Activated T-helper 2 cell treated with anti-CD3 and anti-CD28 coated beads, Interferon-gamma antibody, Interleukin-2, Interleukin-4, amounts not matched to agents 10 μg/mL and 5 μg/mL and 100 μg/mL, durations not matched to agents 14 hours and 24 hours and 36 hours (primary cell): ENCODE measurements at regions of chr22 and their contacts with region 1.

Region 1: GRCh38 chr22:21001560-21002325 is at the start of gene THAP7:
- DNase-seq: peak; percentile 95
- H3K4me3 Mint-ChIP-seq: peak within 1 kb of the TSS; percentile 95
- H3K27ac Mint-ChIP-seq: peak within 1 kb of the TSS; percentile 98
- H3K4me1 Mint-ChIP-seq: peaks cover 15% of the 10 kb centered on the region
- H3K27me3 Mint-ChIP-seq: no peaks in the 10 kb centered on the region
- total RNA-seq, gene THAP7: 25.8 and 25.9 TPM in 2 replicates

Region 2: DNA sequence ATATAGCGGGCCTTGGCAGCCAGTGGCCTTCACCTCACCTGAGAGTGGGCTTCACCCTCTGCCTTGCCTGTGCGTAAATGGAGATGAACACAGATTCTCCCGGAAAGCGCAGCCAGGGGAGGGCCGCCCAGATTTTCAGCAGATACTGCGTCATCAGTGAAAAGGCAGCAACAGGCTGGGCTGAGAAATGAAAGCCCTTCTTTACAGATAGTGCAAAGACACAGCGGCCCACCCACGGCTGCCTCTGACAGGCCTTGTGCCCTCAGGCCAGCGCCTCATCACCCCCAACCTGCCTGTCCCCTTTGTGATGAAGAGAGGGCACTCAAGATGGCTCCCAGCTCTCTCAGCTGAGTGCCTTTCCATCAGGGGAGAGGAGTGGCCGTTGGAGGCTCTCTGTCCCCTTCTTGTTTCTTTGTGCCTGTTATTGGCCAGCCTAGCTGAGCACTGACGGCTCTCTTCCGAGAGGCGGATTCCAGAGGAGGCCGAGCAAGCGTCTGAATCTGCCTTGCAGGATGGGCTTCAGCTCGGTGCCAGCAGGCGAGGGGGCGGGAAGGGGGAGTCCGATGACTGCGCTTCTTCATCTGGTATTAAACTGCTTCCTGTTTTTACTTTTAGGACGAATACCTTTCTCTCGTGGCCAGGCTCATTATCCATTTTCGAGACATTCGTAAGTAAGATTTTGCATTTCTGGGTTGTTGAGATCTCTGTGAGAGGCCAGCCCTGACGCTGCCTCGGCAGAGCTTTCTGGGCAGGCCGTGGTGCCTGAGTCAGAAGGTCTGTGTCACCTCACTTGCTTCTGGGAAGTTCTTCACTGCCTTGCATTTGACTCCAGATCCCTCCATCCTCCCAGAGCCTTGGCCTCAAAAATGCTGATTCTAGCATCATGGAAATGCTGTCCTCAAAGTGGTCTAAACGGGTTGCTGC is 450.7 kb before region 1 on chr22:
- intact Hi-C with region 1: no loop called
- DNase-seq: peak; percentile 18
- H3K4me3 Mint-ChIP-seq: peak overlapping the region; percentile 54
- H3K27ac Mint-ChIP-seq: peak overlapping the region; percentile 94
- H3K4me1 Mint-ChIP-seq: peaks cover 66% of the 10 kb centered on the region
- H3K27me3 Mint-ChIP-seq: no peaks in the 10 kb centered on the region

Region 3: GRCh38 chr22:20916983-20917810 is 84.5 kb before region 1 on chr22 and contains the start of gene CRKL:
- intact Hi-C with region 1: loop called (anchors 5 kb)
- DNase-seq: peak; percentile 95
- H3K4me3 Mint-ChIP-seq: peak within 1 kb of the TSS; percentile 94
- H3K27ac Mint-ChIP-seq: peak within 1 kb of the TSS; percentile 82
- H3K4me1 Mint-ChIP-seq: peaks cover 27% of the 10 kb centered on the region
- H3K27me3 Mint-ChIP-seq: peaks cover 3% of the 10 kb centered on the region
- total RNA-seq, gene CRKL: 79.2 and 80.1 TPM in 2 replicates

Region 4: GRCh38 chr22:21014202-21014725 is 12.5 kb after region 1 on chr22:
- intact Hi-C with region 1: loop called (anchors 1 kb)
- DNase-seq: peak; percentile 83
- H3K4me3 Mint-ChIP-seq: peak overlapping the region; percentile 82
- H3K27ac Mint-ChIP-seq: peak overlapping the region; percentile 53
- H3K4me1 Mint-ChIP-seq: peaks cover 10% of the 10 kb centered on the region
- H3K27me3 Mint-ChIP-seq: peaks cover 3% of the 10 kb centered on the region